IMR-90 (cell line): ENCODE measurements at regions of chr13 and their contacts with region 1.

Region 1: DNA sequence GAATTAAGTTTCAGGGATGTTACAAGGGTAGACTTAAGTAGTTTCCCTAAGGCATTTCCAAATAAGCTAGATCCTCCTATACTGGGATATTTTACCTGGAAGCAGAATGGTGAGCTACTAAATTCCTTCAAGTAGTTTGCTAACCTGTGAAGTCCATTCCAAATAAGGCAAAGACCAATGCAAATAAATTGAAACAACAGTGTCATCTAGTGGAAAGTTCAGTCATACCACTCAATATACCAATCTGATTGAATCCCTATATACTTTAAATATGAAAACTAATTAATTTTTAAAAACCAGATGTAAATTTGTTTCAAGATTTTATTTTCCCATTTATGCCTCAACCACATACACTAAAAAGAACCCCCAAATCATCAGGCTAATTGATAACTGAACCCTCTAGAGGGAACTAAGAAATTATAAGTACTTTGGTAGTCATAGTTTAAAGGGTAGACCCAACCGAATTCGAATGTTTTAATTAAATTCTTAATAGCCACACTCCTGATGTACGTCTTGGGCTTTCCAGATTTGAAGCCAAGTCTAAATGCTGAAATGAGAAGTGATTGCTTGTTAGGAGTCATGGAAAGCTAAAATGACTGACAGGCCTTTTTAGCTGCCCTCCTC is 223.7 kb downstream of the TBC1D4 start:
- DNase-seq: peak; percentile 55
- ATAC-seq: peak; percentile 76
- H3K4me3 ChIP-seq: no peak overlapping the region
- H3K27ac ChIP-seq: no peak overlapping the region
- H3K4me1 ChIP-seq: no peaks in the 10 kb centered on the region
- H3K27me3 ChIP-seq: peaks cover 10% of the 10 kb centered on the region; the same call in 1 of the 2 replicates
- CTCF ChIP-seq: peak; percentile 81
- POLR2A ChIP-seq: no peak
- RAD21 ChIP-seq: peak; percentile 81

Region 2: DNA sequence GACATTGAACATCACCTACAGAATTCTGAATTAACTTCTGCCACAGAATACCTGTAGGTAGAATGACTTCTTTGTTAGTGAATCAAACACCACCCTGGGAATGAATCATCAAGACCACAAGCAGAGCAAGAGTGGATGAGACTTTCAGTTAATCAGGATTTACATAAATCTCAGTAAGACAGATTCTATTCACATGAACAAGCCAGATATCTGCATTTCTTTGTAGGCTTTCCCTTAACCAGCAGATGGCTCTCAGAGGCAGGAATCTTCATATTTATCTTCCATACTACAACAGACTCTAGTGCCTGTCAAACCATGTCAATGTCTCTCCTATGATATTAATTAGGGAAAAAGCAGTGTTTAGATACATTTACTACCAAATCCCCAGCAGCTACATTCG is 1536.2 kb before region 1 on chr13:
- CTCF ChIA-PET with region 1: no interaction called
- POLR2A ChIA-PET with region 1: no interaction called
- dilution Hi-C with region 1: no loop called
- in situ Hi-C with region 1: no loop called
- intact Hi-C with region 1: loop called (anchors 5 kb)
- DNase-seq: peak; percentile 77
- ATAC-seq: peak; percentile 84
- H3K4me3 ChIP-seq: no peak overlapping the region
- H3K27ac ChIP-seq: no peak overlapping the region
- H3K4me1 ChIP-seq: no peaks in the 10 kb centered on the region; the same call in 1 of the 2 replicates
- H3K27me3 ChIP-seq: no peaks in the 10 kb centered on the region
- CTCF ChIP-seq: peak; percentile 49
- POLR2A ChIP-seq: no peak
- RAD21 ChIP-seq: peak; percentile 56

Region 3: GRCh38 chr13:73754727-73755292 is 1503.5 kb before region 1 on chr13:
- CTCF ChIA-PET with region 1: no interaction called
- POLR2A ChIA-PET with region 1: no interaction called
- dilution Hi-C with region 1: no loop called
- in situ Hi-C with region 1: no loop called
- intact Hi-C with region 1: loop called (anchors 10 kb)
- DNase-seq: peak; percentile 70
- ATAC-seq: peak; percentile 79
- H3K4me3 ChIP-seq: no peak overlapping the region
- H3K27ac ChIP-seq: no peak overlapping the region
- H3K4me1 ChIP-seq: no peaks in the 10 kb centered on the region
- H3K27me3 ChIP-seq: no peaks in the 10 kb centered on the region
- CTCF ChIP-seq: peak; percentile 75
- POLR2A ChIP-seq: no peak
- RAD21 ChIP-seq: peak; percentile 81